MCF 10A (cell line): ENCODE measurements at regions of chr4 and their contacts with region 1.

Region 1: GRCh38 chr4:129344058-129344457 is 248.1 kb downstream of the C4orf33 start:
- DNase-seq: peak; percentile 75
- H3K4me3 Mint-ChIP-seq: no peak overlapping the region
- H3K27ac Mint-ChIP-seq: no peak overlapping the region
- H3K4me1 Mint-ChIP-seq: peaks cover 15% of the 10 kb centered on the region
- H3K27me3 Mint-ChIP-seq: no peaks in the 10 kb centered on the region
- CTCF ChIP-seq: peak; percentile 66

Region 2: GRCh38 chr4:129043523-129043922 is 300.5 kb before region 1 on chr4:
- CTCF ChIA-PET with region 1: interaction called, 3 read pairs
- POLR2A ChIA-PET with region 1: no interaction called
- intact Hi-C with region 1: loop called (anchors 2 kb)
- DNase-seq: peak; percentile 43
- H3K4me3 Mint-ChIP-seq: no peak overlapping the region
- H3K27ac Mint-ChIP-seq: no peak overlapping the region
- H3K4me1 Mint-ChIP-seq: no peaks in the 10 kb centered on the region
- H3K27me3 Mint-ChIP-seq: no peaks in the 10 kb centered on the region
- CTCF ChIP-seq: peak; percentile 28

Region 3: DNA sequence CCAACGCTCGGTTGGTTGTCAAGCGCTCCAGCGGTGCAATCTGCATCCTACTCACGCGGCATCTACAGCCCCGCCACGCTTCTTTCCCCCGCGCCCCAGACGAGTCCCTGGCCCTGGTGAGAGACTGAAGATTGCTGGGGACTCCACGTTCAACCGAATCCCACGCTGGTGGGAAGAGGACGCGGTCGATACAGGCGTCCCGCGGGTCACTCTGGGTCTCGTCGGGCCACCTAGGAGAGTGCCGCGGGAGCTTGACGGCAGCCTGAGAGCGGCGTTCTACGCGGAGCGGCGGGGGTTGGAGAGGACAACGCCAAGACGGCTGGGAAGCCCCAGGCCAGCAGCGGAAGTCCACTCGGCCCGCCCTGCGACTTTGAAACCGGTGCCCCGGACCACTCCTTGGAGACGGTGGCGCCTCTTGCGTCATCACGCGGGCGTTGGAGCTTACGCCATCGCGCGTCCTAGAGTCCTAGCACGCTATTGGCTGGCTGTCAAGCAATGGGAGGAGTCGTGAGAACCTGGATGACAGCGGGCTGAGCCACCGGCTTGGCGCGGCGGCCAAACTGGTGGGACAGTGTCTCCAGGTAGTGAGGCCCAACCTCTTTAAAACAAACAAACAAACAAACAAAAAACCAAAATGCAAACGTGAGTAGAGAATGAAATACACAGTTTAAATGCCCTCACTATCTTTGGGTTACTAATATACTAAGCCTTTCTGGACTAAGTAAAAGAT is 250.7 kb before region 1 on chr4 and contains the start of gene SCLT1:
- CTCF ChIA-PET with region 1: interaction called, 10 read pairs
- POLR2A ChIA-PET with region 1: interaction called, 5 read pairs
- intact Hi-C with region 1: no loop called
- DNase-seq: peak; percentile 100
- H3K4me3 Mint-ChIP-seq: no peak within 1 kb of the TSS
- H3K27ac Mint-ChIP-seq: no peak within 1 kb of the TSS
- H3K4me1 Mint-ChIP-seq: peaks cover 13% of the 10 kb centered on the region
- H3K27me3 Mint-ChIP-seq: no peaks in the 10 kb centered on the region
- CTCF ChIP-seq: no peak
- total RNA-seq, gene SCLT1: 16.2 and 20.7 TPM in 2 replicates

Region 4: DNA sequence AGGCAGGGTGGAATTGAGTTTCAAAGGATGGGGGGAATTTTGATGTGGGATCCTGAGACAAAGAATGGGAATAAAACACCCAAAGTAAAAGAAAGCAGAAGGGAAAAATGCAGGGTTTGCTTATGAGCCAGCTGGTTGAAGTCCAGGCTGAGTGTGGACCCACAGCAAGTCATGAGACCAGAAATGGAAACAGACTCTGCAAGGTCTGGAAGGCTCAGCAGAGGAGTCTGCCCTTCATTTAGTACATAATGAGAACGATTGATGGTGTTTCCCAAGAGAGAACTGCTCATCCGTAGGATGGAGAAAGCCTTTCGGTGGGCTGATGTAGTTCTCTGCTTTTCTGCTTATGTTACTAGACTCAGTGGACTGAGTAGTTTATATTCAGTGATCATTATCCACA is 11.0 kb after region 1 on chr4:
- CTCF ChIA-PET with region 1: interaction called, 20 read pairs
- POLR2A ChIA-PET with region 1: interaction called, 4 read pairs
- intact Hi-C with region 1: no loop called
- DNase-seq: no peak
- H3K4me3 Mint-ChIP-seq: no peak overlapping the region
- H3K27ac Mint-ChIP-seq: no peak overlapping the region
- H3K4me1 Mint-ChIP-seq: peaks cover 12% of the 10 kb centered on the region
- H3K27me3 Mint-ChIP-seq: no peaks in the 10 kb centered on the region
- CTCF ChIP-seq: no peak

Region 5: DNA sequence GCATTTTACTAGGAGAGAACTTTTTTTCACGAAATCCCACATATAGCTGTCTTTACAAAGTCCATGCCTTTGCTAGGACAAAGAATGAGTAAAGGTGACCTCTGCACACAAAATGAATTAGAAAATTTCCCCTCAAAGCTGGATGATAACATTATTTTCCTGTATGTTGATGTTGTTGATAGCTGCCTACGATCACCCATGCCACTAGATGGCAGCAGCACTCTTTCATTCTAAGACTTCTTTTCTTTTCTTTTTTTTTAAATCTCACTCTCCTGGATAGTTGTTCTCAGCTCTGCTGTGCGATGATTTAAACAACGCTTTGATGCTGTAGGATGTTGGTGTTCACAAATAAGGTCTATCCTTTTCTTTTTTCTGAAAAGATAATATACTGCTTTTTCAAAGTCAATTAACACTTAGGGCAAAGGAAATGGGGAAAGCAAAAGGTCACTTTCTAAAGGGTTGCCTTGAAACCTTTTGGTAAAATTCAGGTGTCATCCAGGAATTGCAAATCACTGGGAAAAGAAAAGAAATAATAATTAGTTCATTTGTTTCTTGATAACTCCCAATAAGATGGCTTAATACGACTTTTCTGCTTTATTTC is 18.7 kb after region 1 on chr4:
- CTCF ChIA-PET with region 1: interaction called, 15 read pairs
- POLR2A ChIA-PET with region 1: interaction called, 4 read pairs
- intact Hi-C with region 1: no loop called
- DNase-seq: peak; percentile 87
- H3K4me3 Mint-ChIP-seq: no peak overlapping the region
- H3K27ac Mint-ChIP-seq: no peak overlapping the region
- H3K4me1 Mint-ChIP-seq: peaks cover 12% of the 10 kb centered on the region
- H3K27me3 Mint-ChIP-seq: no peaks in the 10 kb centered on the region
- CTCF ChIP-seq: peak; percentile 78

Region 6: DNA sequence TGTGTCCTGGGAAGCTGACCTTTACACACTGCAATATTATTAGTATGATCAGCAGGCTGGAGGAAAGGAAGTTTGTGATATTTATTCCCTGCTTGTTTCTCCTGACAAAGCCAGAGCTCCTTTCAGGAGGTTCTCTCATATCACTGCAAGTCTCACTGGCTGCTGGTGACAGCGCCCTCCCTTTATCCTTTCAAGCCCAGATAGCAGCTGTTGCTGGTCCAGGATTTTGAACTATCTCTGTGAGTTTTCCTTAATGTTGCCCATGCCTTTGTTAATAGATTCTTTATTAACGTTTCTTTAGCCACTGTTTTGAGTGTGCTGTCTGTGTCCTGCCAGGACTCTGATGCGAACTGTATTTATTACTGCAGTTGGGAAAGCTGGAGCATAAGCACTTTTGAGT is 270.6 kb after region 1 on chr4:
- CTCF ChIA-PET with region 1: no interaction called
- POLR2A ChIA-PET with region 1: no interaction called
- intact Hi-C with region 1: no loop called
- DNase-seq: no peak
- H3K4me3 Mint-ChIP-seq: no peak overlapping the region
- H3K27ac Mint-ChIP-seq: no peak overlapping the region
- H3K4me1 Mint-ChIP-seq: no peaks in the 10 kb centered on the region
- H3K27me3 Mint-ChIP-seq: no peaks in the 10 kb centered on the region
- CTCF ChIP-seq: no peak

Region 7: GRCh38 chr4:129738175-129738574 is 394.1 kb after region 1 on chr4:
- CTCF ChIA-PET with region 1: no interaction called
- POLR2A ChIA-PET with region 1: no interaction called
- intact Hi-C with region 1: loop called (anchors 10 kb)
- DNase-seq: no peak
- H3K4me3 Mint-ChIP-seq: no peak overlapping the region
- H3K27ac Mint-ChIP-seq: no peak overlapping the region
- H3K4me1 Mint-ChIP-seq: peaks cover 7% of the 10 kb centered on the region
- H3K27me3 Mint-ChIP-seq: no peaks in the 10 kb centered on the region
- CTCF ChIP-seq: no peak